Upper lobe of right lung (tissue), 1 donor: ENCODE measurements at regions of chr2 and their contacts with region 1.

Region 1: DNA sequence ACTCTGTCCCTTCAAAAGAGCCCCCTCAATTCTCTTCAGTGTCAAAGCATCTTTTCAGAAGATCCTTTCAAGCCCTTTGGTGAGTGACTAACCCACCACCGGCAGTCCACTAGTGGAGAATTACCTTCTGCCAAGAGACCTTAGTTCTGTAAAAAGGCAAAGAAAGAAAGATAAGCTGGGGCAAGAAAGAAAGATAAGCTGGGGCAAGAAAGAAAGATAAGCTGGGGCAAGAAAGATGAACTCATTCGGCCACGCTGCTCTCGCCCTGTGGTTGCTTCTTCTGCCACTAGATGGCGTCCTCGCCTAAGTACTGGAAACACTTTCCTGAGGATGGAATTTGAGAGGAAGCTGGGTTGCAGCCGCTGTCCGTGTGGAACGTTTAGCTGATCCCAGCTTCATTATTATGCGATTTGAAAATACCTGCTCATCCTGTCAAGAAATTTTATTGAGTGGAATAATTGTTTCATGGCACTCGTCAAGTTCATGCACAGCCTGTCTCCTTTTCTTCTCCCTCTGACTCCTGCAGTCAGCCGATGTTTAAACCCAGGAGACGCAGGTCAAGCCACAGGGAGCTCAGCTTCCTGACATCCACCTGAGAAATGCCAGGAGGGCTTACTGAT is 17.3 kb upstream of the ANXA4 start:
- DNase-seq: peak; percentile 85
- ATAC-seq: peak; percentile 99
- H3K4me3 ChIP-seq: peak overlapping the region; percentile 36
- H3K27ac ChIP-seq: no peak overlapping the region
- H3K4me1 ChIP-seq: peaks cover 4% of the 10 kb centered on the region
- H3K27me3 ChIP-seq: no peaks in the 10 kb centered on the region
- CTCF ChIP-seq: peak; percentile 97

Region 2: GRCh38 chr2:69816923-69817542 is 92.4 kb after region 1 on chr2:
- intact Hi-C with region 1: loop called (anchors 5 kb)
- DNase-seq: no peak
- ATAC-seq: peak; percentile 93
- H3K4me3 ChIP-seq: no peak overlapping the region
- H3K27ac ChIP-seq: no peak overlapping the region
- H3K4me1 ChIP-seq: no peaks in the 10 kb centered on the region
- H3K27me3 ChIP-seq: no peaks in the 10 kb centered on the region
- CTCF ChIP-seq: peak; percentile 91